ENCODE measurements at regions of chr18 and their contacts with region 1.

Region 1: DNA sequence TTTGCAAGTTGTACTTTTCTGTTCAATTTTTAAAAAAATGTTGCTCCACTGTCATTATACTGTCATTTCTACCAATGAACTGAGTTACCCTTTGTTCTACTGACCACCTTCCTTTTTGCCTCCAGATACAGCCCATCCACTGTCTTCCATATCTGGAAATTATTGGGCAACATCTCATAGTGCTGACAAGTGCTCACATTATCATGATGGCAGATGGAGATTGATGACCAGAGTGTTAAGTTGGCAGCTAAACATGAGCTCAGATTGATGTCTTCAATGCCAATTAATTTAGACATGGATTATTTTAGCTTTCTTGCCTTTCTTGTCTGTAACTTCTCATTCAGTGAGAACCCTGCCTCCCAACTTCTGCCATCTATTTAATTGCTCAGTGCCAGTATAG is 76.6 kb downstream of the KIAA1328 start:
- DNase-seq: no peak
- H3K4me3 ChIP-seq: no peak overlapping the region
- H3K27ac ChIP-seq: no peak overlapping the region
- H3K4me1 ChIP-seq: peaks cover 7% of the 10 kb centered on the region
- H3K27me3 ChIP-seq: no peaks in the 10 kb centered on the region
- CTCF ChIP-seq: no peak
- POLR2A ChIP-seq: no peak

Region 2: DNA sequence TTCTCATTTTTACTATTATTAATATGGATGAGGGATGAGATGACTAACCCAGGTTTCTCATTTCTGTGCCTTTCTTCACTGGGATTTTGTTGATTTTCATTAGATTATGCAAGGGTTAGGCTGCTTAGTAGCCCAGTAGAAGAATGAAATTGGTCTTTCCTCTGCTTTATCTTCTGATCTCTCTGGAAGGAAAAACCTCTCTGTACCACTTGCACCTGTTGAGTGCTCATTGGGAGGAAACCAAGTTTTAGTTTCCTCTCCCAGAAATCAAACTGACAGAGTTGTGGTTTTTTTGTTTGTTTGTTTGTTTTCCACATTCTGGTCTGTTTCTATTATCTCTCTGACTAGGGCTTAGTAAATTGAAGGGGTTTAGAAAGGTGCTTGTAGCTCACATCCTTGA is 15.8 kb before region 1 on chr18:
- CTCF ChIA-PET with region 1: interaction called, 4 read pairs
- POLR2A ChIA-PET with region 1: no interaction called
- dilution Hi-C with region 1: no loop called
- intact Hi-C with region 1: loop called (anchors 2 kb)
- DNase-seq: no peak
- H3K4me3 ChIP-seq: no peak overlapping the region
- H3K27ac ChIP-seq: no peak overlapping the region
- H3K4me1 ChIP-seq: no peaks in the 10 kb centered on the region
- H3K27me3 ChIP-seq: no peaks in the 10 kb centered on the region
- CTCF ChIP-seq: no peak
- POLR2A ChIP-seq: no peak

Region 3: DNA sequence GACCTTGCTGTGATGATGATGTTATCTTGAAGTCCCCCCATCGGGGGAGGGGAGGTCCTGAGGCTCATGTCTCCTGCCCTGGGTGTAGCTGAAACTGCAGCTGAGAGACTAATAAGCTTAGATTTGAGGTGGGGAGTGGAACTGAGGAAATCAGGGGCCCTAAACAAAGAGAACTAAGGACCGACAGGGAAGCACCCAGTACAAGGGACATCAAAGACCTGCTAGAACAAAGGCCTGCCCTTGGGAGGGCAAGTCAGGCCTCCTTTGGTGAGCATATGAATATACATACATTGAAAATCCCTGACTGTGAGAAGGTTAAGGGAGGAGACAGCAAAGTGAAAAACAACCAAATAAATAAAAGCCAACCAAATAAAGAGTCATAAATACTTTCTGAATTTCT is 1792.5 kb after region 1 on chr18:
- CTCF ChIA-PET with region 1: no interaction called
- POLR2A ChIA-PET with region 1: no interaction called
- dilution Hi-C with region 1: no loop called
- intact Hi-C with region 1: no loop called
- DNase-seq: no peak
- H3K4me3 ChIP-seq: no peak overlapping the region
- H3K27ac ChIP-seq: no peak overlapping the region
- H3K4me1 ChIP-seq: no peaks in the 10 kb centered on the region
- H3K27me3 ChIP-seq: no peaks in the 10 kb centered on the region
- CTCF ChIP-seq: no peak
- POLR2A ChIP-seq: no peak

Measured in endothelial cell of umbilical vein (primary cell).